GM12878 (cell line): ENCODE measurements at regions of chr1 and their contacts with region 1.

Region 1: DNA sequence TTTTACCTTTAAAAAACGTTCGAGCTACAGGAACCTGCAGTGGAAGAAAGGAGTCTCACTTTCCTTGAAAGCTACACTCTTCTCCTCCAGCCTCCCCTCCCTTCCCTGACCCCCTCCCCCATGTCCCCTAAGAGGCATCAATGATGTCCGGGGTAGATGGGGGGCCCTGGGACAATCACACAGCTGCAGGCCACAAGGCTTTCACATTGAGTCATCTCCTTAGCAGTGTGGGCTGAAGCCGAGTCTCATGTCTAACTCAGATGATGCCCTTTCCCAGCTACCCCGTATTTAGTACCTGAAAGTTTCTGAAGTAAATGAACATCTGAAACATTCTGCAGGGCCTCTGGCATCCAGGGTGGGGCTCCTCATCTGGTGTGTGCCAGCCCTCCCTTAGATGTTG is 6.3 kb upstream of the GPR25 start:
- DNase-seq: peak; percentile 98
- ATAC-seq: peak; percentile 74
- H3K4me3 ChIP-seq: no peak overlapping the region
- H3K27ac ChIP-seq: peak overlapping the region; percentile 71
- H3K4me1 ChIP-seq: peaks cover 71% of the 10 kb centered on the region
- H3K27me3 ChIP-seq: no peaks in the 10 kb centered on the region
- CTCF ChIP-seq: no peak
- EP300 ChIP-seq: peak; percentile 96 to 97
- POLR2A ChIP-seq: no peak
- RAD21 ChIP-seq: peak; percentile 22; the same call in 1 of the 2 replicates

Region 2: DNA sequence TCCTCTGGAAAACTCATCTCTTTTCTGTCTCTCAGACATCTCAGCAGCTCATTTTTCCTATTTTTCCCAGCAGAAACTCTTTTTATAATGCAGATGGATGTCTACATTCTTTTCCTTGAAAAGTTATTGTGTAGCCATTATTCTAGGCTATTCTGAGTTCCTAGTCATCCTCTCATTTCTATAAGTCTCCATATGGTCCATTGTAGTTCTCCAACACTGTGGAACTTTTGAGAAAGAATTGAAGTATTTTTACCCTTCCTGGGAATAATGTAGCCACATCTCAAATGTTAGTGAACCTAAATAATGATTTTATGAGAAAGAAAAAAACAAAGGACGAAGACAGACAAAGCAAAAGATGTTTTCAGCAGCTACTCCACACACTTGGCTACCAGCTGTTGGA is 20.1 kb before region 1 on chr1:
- CTCF ChIA-PET with region 1: interaction called, 4 read pairs
- POLR2A ChIA-PET with region 1: no interaction called
- RAD21 ChIA-PET with region 1: interaction called, 4 read pairs
- SMC1A ChIA-PET with region 1: interaction called, 6 read pairs
- in situ Hi-C with region 1: no loop called
- intact Hi-C with region 1: loop called (anchors 1 kb)
- DNase-seq: no peak
- ATAC-seq: no peak
- H3K4me3 ChIP-seq: no peak overlapping the region
- H3K27ac ChIP-seq: no peak overlapping the region
- H3K4me1 ChIP-seq: no peaks in the 10 kb centered on the region
- H3K27me3 ChIP-seq: no peaks in the 10 kb centered on the region
- CTCF ChIP-seq: no peak
- EP300 ChIP-seq: no peak
- POLR2A ChIP-seq: no peak
- RAD21 ChIP-seq: no peak

Region 3: GRCh38 chr1:200877839-200878551 is 11.5 kb after region 1 on chr1:
- CTCF ChIA-PET with region 1: interaction called, 73 read pairs
- POLR2A ChIA-PET with region 1: interaction called, 62 read pairs
- RAD21 ChIA-PET with region 1: interaction called, 111 read pairs
- SMC1A ChIA-PET with region 1: interaction called, 208 read pairs
- in situ Hi-C with region 1: no loop called
- intact Hi-C with region 1: loop called (anchors 1 kb)
- DNase-seq: peak; percentile 89
- ATAC-seq: peak; percentile 84
- H3K4me3 ChIP-seq: no peak overlapping the region
- H3K27ac ChIP-seq: no peak overlapping the region
- H3K4me1 ChIP-seq: peaks cover 17% of the 10 kb centered on the region
- H3K27me3 ChIP-seq: no peaks in the 10 kb centered on the region
- CTCF ChIP-seq: no peak
- EP300 ChIP-seq: peak in 1 of 2 experiments; percentile 58; a peak in 1 of 4 replicates
- POLR2A ChIP-seq: no peak
- RAD21 ChIP-seq: no peak

Region 4: GRCh38 chr1:200883118-200883517 is 16.6 kb after region 1 on chr1:
- CTCF ChIA-PET with region 1: interaction called, 78 read pairs
- POLR2A ChIA-PET with region 1: interaction called, 62 read pairs
- RAD21 ChIA-PET with region 1: interaction called, 125 read pairs
- SMC1A ChIA-PET with region 1: interaction called, 208 read pairs
- in situ Hi-C with region 1: no loop called
- intact Hi-C with region 1: loop called (anchors 1 kb)
- DNase-seq: no peak
- ATAC-seq: no peak
- H3K4me3 ChIP-seq: no peak overlapping the region
- H3K27ac ChIP-seq: no peak overlapping the region
- H3K4me1 ChIP-seq: peaks cover 29% of the 10 kb centered on the region
- H3K27me3 ChIP-seq: no peaks in the 10 kb centered on the region
- CTCF ChIP-seq: no peak
- EP300 ChIP-seq: no peak
- POLR2A ChIP-seq: no peak
- RAD21 ChIP-seq: no peak

Region 5: DNA sequence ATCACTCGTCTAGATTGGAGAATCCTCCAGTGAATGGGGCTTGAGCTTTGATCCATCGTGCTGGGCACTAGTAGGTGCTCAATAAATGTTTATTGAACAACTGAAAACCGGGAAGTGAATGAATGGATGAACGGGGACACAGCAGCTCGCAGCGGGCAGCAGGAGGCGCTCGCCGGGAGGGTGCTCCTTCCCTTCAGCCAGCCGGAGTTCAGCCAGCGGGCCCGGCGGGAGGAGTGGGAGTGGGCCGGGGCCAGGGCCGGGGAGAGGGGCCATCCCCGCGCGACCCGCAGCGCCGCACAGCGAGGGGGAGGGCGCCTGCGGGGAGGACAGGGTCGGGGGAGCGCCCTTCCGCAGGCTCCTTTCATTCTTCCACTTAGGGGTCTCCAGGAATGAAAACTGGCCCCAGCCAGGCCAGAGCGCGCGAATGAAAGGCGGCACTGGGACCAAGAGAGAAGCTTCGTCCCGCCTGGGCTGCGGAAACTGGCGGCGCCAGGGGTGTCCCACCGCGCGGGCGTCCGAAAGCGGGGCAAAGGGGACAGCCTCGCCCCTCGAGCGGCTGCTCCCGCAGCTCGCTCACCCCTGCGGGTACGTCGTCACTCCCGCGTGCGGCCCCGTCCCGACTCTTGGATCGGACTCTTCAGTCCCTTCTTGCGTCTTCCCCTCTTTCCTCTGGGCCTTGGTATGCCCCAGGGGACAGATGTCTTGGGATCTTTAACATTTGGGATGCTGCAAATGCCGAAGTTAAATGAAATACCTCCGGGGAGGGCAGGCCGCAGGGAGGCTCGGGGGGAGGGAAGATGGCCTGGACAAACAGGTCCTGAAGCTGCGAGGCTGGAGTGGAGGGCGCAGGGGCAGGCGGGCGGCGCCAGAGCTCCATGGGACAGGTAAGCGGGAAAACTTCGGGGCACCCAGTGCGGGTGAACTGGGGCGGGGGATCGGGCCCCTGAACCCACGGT is 24.6 kb after region 1 on chr1:
- CTCF ChIA-PET with region 1: interaction called, 78 read pairs
- POLR2A ChIA-PET with region 1: interaction called, 40 read pairs
- RAD21 ChIA-PET with region 1: interaction called, 125 read pairs
- SMC1A ChIA-PET with region 1: interaction called, 86 read pairs
- in situ Hi-C with region 1: no loop called
- intact Hi-C with region 1: loop called (anchors 1 kb)
- DNase-seq: no peak
- ATAC-seq: peak; percentile 5
- H3K4me3 ChIP-seq: peak overlapping the region; percentile 45
- H3K27ac ChIP-seq: peak overlapping the region; percentile 69; the same call in 1 of the 2 replicates
- H3K4me1 ChIP-seq: peaks cover 61% of the 10 kb centered on the region
- H3K27me3 ChIP-seq: no peaks in the 10 kb centered on the region
- CTCF ChIP-seq: peak; percentile 42 to 58 (median 47)
- EP300 ChIP-seq: no peak
- POLR2A ChIP-seq: peak; percentile 53; the same call in 1 of the 2 replicates
- RAD21 ChIP-seq: peak; percentile 26; the same call in 1 of the 2 replicates

Region 6: GRCh38 chr1:200896531-200897196 is 30.1 kb after region 1 on chr1:
- CTCF ChIA-PET with region 1: interaction called, 78 read pairs
- POLR2A ChIA-PET with region 1: interaction called, 12 read pairs
- RAD21 ChIA-PET with region 1: interaction called, 125 read pairs
- SMC1A ChIA-PET with region 1: interaction called, 86 read pairs
- in situ Hi-C with region 1: no loop called
- intact Hi-C with region 1: no loop called
- DNase-seq: no peak
- ATAC-seq: no peak
- H3K4me3 ChIP-seq: no peak overlapping the region
- H3K27ac ChIP-seq: no peak overlapping the region
- H3K4me1 ChIP-seq: peaks cover 19% of the 10 kb centered on the region
- H3K27me3 ChIP-seq: no peaks in the 10 kb centered on the region
- CTCF ChIP-seq: no peak
- EP300 ChIP-seq: no peak
- POLR2A ChIP-seq: no peak
- RAD21 ChIP-seq: no peak

Region 7: GRCh38 chr1:201224666-201225370 is 358.3 kb after region 1 on chr1:
- CTCF ChIA-PET with region 1: no interaction called
- POLR2A ChIA-PET with region 1: no interaction called
- RAD21 ChIA-PET with region 1: no interaction called
- SMC1A ChIA-PET with region 1: no interaction called
- in situ Hi-C with region 1: no loop called
- intact Hi-C with region 1: no loop called
- DNase-seq: no peak
- ATAC-seq: no peak
- H3K4me3 ChIP-seq: no peak overlapping the region
- H3K27ac ChIP-seq: no peak overlapping the region
- H3K4me1 ChIP-seq: no peaks in the 10 kb centered on the region
- H3K27me3 ChIP-seq: peaks cover 0 to 5% of the 10 kb centered on the region in 2 experiments; a peak in 3 of 4 replicates
- CTCF ChIP-seq: no peak
- EP300 ChIP-seq: no peak
- POLR2A ChIP-seq: no peak
- RAD21 ChIP-seq: no peak